Dorsolateral prefrontal cortex (tissue), 120 donors: ENCODE measurements at regions of chr12 and their contacts with region 1.

Region 1: DNA sequence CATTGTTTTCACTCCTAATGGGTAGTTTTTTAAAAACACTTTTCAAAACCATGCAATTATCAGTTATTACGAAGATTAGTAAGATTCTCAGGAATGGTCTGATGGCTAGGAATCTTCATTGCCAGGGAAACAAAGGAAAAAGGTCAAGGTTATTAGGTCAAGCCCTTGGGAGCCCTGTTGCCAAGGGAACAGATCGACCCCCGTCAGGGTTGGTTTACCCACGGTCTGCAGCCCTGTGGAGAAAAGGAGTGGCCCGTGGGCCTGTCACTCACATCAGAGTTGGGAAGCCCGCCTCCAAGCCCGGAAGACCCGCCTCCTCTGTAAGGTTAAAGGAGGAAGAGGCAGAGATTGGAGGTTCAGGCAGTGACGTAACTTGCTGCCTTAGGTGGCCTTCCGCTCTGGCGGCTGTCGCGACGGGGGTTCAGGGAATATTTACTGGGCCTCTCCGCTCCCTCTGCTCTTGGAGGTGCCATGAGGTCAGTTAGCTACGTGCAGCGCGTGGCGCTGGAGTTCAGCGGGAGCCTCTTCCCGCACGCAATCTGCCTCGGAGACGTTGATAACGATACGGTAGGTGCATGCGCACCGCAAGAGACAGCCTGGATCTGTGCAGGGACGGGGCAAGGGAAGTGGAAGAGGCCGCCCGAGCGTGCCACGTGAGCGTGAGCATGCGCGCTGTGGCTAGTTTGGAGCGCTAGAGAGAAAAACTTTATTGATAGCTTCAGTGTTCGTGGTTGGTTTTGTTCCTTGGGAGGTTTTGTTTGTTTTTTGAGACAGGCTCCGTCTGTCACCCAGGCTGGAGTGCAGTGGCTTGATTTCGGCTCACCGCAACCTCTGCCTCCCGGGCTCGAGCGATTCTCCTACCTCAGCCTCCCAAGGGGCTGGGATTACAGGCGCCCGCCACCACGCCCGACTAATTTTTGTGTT is at the start of gene ITFG2:
- DNase-seq: peak; percentile 97 to 100 (median 99)
- H3K4me3 ChIP-seq: peak within 1 kb of the TSS; percentile 58 to 99 (median 84)
- H3K27ac ChIP-seq: peak within 1 kb of the TSS; percentile 87 to 100 (median 98)
- H3K27me3 ChIP-seq: no peaks in the 10 kb centered on the region
- CTCF ChIP-seq: peak in 27 of 56 donors; percentile 6 to 55 (median 23)
- total RNA-seq, gene ITFG2: 22.7 to 59.1 (median 39.9) TPM

Region 2: GRCh38 chr12:2794736-2795289 is 17.7 kb before region 1 on chr12 and contains the start of gene FKBP4:
- intact Hi-C with region 1: loop called (anchors 1 kb)
- DNase-seq: peak; percentile 85 to 97 (median 94)
- H3K4me3 ChIP-seq: peak within 1 kb of the TSS; percentile 59 to 99 (median 82)
- H3K27ac ChIP-seq: peak within 1 kb of the TSS; percentile 88 to 100 (median 98)
- H3K27me3 ChIP-seq: no peaks in the 10 kb centered on the region
- CTCF ChIP-seq: peak in 13 of 56 donors; percentile 5 to 38 (median 12)
- total RNA-seq, gene FKBP4: 73.3 to 450 (median 131) TPM

Region 3: GRCh38 chr12:2877047-2877952 is 64.7 kb after region 1 on chr12 and contains the starts of genes FOXM1 and RHNO1:
- intact Hi-C with region 1: loop called in 1 of 2 experiments (anchors 5 kb)
- DNase-seq: peak; percentile 91 to 97 (median 94)
- H3K4me3 ChIP-seq: peak within 1 kb of the TSS; percentile 62 to 99 (median 89)
- H3K27ac ChIP-seq: peak within 1 kb of the TSS; percentile 62 to 98 (median 93)
- H3K27me3 ChIP-seq: no peaks in the 10 kb centered on the region
- CTCF ChIP-seq: peak in 49 of 56 donors; percentile 14 to 61 (median 39)
- total RNA-seq, gene FOXM1: 0.18 to 3.6 (median 0.89) TPM in 118 of 120 experiments, not detected in the others
- total RNA-seq, gene RHNO1: 7.0 to 28.4 (median 14.3) TPM